ENCODE measurements at regions of chr16 and their contacts with region 1.

Region 1: DNA sequence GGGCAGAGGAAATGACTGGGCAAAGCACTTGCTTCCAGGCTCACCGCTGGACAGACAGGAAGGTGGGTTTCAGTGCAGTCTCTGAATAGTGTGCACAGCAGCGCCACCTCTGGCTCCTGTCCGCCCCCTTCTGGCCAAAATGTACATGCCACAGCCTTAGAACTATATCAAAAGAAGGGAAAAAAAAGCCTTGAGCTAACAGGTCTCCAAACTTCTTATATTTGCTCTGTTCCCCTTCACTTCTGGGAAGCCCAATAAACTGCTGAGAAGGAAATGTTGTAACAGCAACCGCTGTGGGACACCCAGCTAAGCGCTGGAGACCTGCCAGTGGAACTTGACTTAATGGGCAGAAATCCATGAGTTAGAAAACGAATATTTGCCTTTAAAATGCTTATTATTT is 17.5 kb downstream of the COG7 start:
- DNase-seq: peak; percentile 81
- H3K4me3 ChIP-seq: no peak overlapping the region
- H3K27ac ChIP-seq: no peak overlapping the region
- H3K4me1 ChIP-seq: no peaks in the 10 kb centered on the region
- H3K27me3 ChIP-seq: no peaks in the 10 kb centered on the region
- CTCF ChIP-seq: peak; percentile 89 to 96
- POLR2A ChIP-seq: no peak

Region 2: DNA sequence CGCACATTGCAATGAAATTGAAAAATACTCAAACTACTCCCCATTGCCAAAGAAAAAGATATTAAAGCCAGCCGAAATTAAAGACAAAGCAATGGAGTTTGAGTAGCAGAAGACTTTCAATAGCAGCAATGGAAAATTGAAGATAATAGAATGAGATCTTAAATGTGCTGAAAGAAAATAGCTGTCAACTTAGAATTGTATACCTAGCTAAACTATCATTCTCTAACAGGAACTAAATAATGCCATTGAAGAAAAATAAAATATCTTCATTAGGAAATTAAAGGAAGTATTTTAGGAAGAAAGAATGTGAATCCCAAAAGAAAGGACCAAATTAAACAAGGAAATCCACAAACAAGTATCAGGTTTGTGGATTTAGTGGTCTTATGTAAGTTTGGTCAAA is 451.9 kb before region 1 on chr16:
- CTCF ChIA-PET with region 1: no interaction called
- POLR2A ChIA-PET with region 1: no interaction called
- dilution Hi-C with region 1: no loop called
- intact Hi-C with region 1: no loop called
- DNase-seq: no peak
- H3K4me3 ChIP-seq: no peak overlapping the region
- H3K27ac ChIP-seq: no peak overlapping the region
- H3K4me1 ChIP-seq: no peaks in the 10 kb centered on the region
- H3K27me3 ChIP-seq: no peaks in the 10 kb centered on the region
- CTCF ChIP-seq: no peak
- POLR2A ChIP-seq: no peak

Region 3: DNA sequence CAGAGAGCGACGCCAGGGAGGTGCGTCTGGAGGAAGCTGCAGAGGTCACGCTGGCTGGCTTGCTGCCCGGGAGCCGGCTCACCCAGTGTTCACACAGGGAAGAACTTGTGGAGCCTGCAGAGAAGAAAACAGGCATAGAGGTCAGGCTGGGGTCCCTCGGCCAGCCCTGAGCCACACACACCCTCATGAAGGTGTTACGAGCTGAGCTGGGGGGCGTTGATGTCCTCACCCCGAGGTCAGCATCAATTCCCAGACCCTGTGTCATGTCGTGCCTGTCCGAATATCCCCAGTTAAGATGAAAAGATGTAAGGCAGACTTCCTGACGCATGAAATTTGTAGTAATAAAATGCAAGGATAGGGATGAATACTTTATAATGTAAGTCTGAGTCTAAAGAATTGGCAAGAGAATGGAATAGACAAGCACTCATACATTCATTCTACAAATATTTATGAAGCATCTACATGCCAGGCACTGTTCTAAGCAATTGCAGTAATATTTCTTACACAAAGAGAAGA is 363.4 kb before region 1 on chr16:
- CTCF ChIA-PET with region 1: interaction called, 18 read pairs
- POLR2A ChIA-PET with region 1: no interaction called
- dilution Hi-C with region 1: no loop called
- intact Hi-C with region 1: no loop called
- DNase-seq: peak; percentile 90
- H3K4me3 ChIP-seq: no peak overlapping the region
- H3K27ac ChIP-seq: peak overlapping the region; percentile 44
- H3K4me1 ChIP-seq: peaks cover 15% of the 10 kb centered on the region
- H3K27me3 ChIP-seq: no peaks in the 10 kb centered on the region
- CTCF ChIP-seq: no peak
- POLR2A ChIP-seq: no peak

Region 4: DNA sequence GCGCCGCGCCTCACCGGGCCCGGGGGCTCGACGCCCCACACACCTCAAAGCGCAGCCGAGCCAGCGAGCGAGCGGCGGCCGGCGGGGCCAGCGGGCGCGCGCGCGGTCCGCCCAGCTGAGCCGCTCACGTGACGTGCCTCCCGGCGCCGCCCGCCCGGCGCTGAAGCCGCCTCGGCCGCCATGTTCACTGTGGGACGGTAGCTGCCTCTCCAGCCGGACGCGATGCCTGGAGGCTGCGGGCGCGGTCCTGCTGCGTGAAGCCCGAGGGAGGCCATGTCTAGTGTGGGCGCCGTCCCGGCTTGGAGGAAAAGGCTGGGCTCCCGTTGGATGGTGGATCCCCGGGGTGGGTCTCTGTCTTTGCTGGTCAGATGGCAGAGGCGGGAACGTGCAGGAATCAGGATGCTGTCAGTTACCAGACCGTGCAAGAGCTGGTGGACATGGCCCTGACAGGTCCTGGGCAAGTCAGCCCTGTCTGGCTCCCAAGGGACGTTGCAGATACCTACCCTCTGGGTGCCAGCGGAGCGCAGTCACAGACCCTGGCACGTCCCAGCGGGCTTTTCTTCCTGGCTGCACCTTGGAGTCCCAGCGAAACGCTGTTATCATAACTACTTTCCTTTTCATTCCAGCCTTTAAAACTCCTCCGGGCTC is 286.0 kb before region 1 on chr16 and contains the start of gene USP31:
- CTCF ChIA-PET with region 1: interaction called, 15 read pairs
- POLR2A ChIA-PET with region 1: no interaction called
- dilution Hi-C with region 1: no loop called
- intact Hi-C with region 1: no loop called
- DNase-seq: peak; percentile 96
- H3K4me3 ChIP-seq: peak within 1 kb of the TSS; percentile 75 to 91 (median 84)
- H3K27ac ChIP-seq: peak within 1 kb of the TSS; percentile 51
- H3K4me1 ChIP-seq: peaks cover 21% of the 10 kb centered on the region
- H3K27me3 ChIP-seq: no peaks in the 10 kb centered on the region
- CTCF ChIP-seq: no peak
- POLR2A ChIP-seq: no peak
- total RNA-seq, gene USP31: 37.4 and 42.4 TPM in 2 replicates

Region 5: DNA sequence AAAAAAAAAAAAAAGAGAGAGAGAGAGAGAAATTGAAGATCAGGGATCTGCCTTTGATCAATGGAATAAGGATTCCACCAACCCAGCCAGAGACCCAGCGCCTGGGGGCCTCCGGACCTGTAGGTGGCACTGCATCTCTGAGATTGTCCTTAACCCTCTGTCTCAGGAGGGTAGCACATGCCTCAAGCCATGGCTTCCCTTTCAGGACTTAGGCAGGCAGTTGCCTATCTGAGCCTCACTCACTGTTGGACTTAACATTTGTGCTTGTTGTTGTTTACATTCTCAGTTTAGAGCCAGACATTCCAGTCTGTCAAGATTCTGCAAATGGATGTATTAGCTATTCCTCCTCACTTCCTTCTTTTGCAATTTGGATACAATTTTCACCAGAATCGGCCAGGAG is 138.5 kb before region 1 on chr16:
- CTCF ChIA-PET with region 1: interaction called, 21 read pairs
- POLR2A ChIA-PET with region 1: no interaction called
- dilution Hi-C with region 1: no loop called
- intact Hi-C with region 1: loop called (anchors 2 kb)
- DNase-seq: no peak
- H3K4me3 ChIP-seq: no peak overlapping the region
- H3K27ac ChIP-seq: no peak overlapping the region
- H3K4me1 ChIP-seq: no peaks in the 10 kb centered on the region
- H3K27me3 ChIP-seq: peaks cover 7 to 9% of the 10 kb centered on the region in 2 experiments
- CTCF ChIP-seq: peak in 1 of 2 donors; percentile 32
- POLR2A ChIP-seq: no peak

Region 6: GRCh38 chr16:23391381-23392222 is 43.9 kb before region 1 on chr16:
- CTCF ChIA-PET with region 1: interaction called, 9 read pairs
- POLR2A ChIA-PET with region 1: no interaction called
- dilution Hi-C with region 1: no loop called
- intact Hi-C with region 1: loop called (anchors 5 kb)
- DNase-seq: no peak
- H3K4me3 ChIP-seq: no peak overlapping the region
- H3K27ac ChIP-seq: no peak overlapping the region
- H3K4me1 ChIP-seq: peaks cover 15% of the 10 kb centered on the region
- H3K27me3 ChIP-seq: no peaks in the 10 kb centered on the region
- CTCF ChIP-seq: no peak
- POLR2A ChIP-seq: no peak

Region 7: DNA sequence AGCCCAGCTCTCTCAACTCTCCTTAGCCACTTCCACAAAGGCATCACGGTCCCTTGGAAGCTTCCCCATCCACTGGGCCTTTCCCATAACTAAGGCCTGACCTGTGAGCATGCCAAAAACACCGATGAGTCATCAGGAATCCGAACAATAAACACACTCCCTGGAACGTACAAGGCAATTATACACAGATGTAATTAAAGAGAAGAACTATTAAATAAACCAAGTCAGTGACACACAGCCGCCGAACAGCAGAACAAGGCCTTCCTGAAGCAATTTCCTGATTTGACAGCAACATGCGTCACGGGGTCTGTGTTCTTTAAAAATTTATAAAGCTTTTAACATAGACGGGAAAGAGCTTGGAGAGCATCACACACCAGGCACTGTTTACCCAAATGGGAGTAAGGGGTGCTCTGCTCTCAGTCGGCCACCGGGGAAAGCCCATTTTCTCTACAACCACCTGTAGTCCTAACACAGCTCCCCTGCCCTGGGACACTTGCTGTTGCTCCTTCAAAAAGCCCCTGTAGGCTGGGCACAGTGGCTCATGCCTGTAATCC is 11.9 kb before region 1 on chr16:
- CTCF ChIA-PET with region 1: interaction called, 73 read pairs
- POLR2A ChIA-PET with region 1: interaction called, 3 read pairs
- dilution Hi-C with region 1: no loop called
- intact Hi-C with region 1: no loop called
- DNase-seq: peak; percentile 100
- H3K4me3 ChIP-seq: no peak overlapping the region
- H3K27ac ChIP-seq: peak overlapping the region; percentile 96
- H3K4me1 ChIP-seq: peaks cover 24% of the 10 kb centered on the region
- H3K27me3 ChIP-seq: no peaks in the 10 kb centered on the region
- CTCF ChIP-seq: no peak
- POLR2A ChIP-seq: no peak

Region 8: GRCh38 chr16:23678430-23679273 is 243.2 kb after region 1 on chr16 and contains the start of gene PLK1:
- CTCF ChIA-PET with region 1: no interaction called
- POLR2A ChIA-PET with region 1: no interaction called
- dilution Hi-C with region 1: no loop called
- intact Hi-C with region 1: no loop called
- DNase-seq: peak; percentile 84
- H3K4me3 ChIP-seq: peak within 1 kb of the TSS; percentile 55 to 77 (median 68)
- H3K27ac ChIP-seq: peak within 1 kb of the TSS; percentile 4
- H3K4me1 ChIP-seq: peaks cover 27% of the 10 kb centered on the region
- H3K27me3 ChIP-seq: no peaks in the 10 kb centered on the region
- CTCF ChIP-seq: peak in 1 of 2 donors; percentile 33
- POLR2A ChIP-seq: no peak
- total RNA-seq, gene PLK1: 100 and 109 TPM in 2 replicates